Transverse colon (tissue), 4 donors: ENCODE measurements at regions of chr12 and their contacts with region 1.

Region 1: GRCh38 chr12:7667125-7667524 is 1.4 kb upstream of the APOBEC1 start:
- DNase-seq: no peak
- H3K4me3 ChIP-seq: no peak overlapping the region
- H3K27ac ChIP-seq: no peak overlapping the region
- H3K4me1 ChIP-seq: peaks cover 0 to 5% (median 0%) of the 10 kb centered on the region in 4 donors
- H3K27me3 ChIP-seq: no peaks in the 10 kb centered on the region
- CTCF ChIP-seq: no peak
- EP300 ChIP-seq: no peak
- POLR2A ChIP-seq: no peak

Region 2: DNA sequence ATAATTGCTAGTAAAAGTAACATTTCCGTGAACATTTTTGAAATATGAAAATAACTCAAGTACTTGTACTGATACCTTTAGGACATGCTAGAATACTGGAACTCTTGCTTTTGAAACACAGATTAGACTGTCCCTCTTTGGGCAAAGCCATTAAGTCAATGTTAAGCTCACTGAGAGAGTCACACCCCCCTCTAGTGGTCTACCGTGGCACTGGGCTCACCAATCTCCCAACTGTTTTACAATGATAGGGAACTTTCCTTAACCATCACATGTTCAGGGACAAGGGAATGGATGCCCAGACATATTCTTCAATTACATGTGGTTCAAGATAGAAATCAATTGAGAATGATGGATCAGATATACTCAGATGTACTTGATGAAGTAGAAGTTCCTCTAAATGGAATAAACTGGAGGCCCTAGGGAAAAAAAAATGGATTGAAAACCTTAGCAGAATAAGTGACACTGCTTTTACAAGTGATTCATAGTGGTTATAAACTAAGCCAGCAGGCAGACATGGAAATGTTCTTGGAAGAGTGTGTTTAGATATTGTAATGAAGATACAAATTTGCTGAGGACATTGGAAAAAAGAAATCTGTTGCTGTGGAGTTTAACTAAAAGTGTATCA is 139.8 kb after region 1 on chr12:
- in situ Hi-C with region 1: loop called in 1 of 4 experiments (anchors 25 kb)
- intact Hi-C with region 1: no loop called
- DNase-seq: peak; percentile 59
- H3K4me3 ChIP-seq: no peak overlapping the region
- H3K27ac ChIP-seq: no peak overlapping the region
- H3K4me1 ChIP-seq: no peaks in the 10 kb centered on the region
- H3K27me3 ChIP-seq: no peaks in the 10 kb centered on the region
- CTCF ChIP-seq: peak; percentile 26 to 77 (median 66)
- EP300 ChIP-seq: no peak
- POLR2A ChIP-seq: no peak